CD4-positive, alpha-beta T cell (primary cell): ENCODE measurements at regions of chr18 and their contacts with region 1.

Region 1: DNA sequence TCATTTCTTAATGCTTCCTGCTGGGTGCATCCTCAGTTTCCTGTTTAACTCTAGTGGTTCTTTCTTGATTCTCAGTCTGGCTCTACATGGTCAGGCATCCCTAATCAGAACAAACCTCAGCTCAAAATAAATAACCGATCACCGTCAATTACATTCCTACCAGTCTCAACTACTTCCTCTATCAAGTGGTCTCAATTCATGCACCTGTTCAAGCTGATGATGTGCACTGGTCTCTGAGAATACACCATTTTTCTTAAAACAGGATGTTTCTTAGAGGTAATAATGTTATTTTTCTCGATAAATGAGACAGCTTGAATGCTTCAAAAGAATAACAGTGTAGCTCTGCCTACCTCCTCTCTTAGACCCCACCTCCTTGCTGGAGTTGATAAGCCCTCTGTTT is 420.9 kb downstream of the SOCS6 start:
- DNase-seq: no peak
- ATAC-seq: peak; percentile 44
- H3K4me3 ChIP-seq: no peak overlapping the region
- H3K4me3 Mint-ChIP-seq: no peak overlapping the region
- H3K27ac ChIP-seq: no peak overlapping the region
- H3K27ac Mint-ChIP-seq: peak overlapping the region; percentile 53
- H3K4me1 ChIP-seq: no peaks in the 10 kb centered on the region
- H3K4me1 Mint-ChIP-seq: peaks cover 12% of the 10 kb centered on the region
- H3K27me3 ChIP-seq: no peaks in the 10 kb centered on the region
- H3K27me3 Mint-ChIP-seq: no peaks in the 10 kb centered on the region
- CTCF ChIP-seq: no peak

Region 2: DNA sequence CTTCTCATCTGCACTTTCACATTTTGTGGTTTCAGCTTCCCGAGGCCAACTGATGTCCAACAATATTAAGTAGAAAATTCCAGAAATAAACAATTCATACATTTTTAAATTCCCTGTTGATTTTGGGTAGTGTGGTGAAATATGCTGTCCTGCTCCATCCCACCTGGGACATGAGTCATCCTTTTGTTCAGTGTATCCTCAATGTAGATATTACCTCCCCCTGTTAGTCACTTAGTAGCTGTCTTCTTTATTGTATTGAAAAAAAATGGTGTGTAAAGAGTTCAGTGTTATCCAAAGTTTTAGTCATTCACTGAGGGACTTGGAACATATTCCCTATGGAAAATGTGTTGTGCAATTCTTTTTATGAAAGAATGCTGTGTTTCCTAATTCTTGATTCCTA is 72.7 kb before region 1 on chr18:
- CTCF ChIA-PET with region 1: no interaction called
- POLR2A ChIA-PET with region 1: no interaction called
- intact Hi-C with region 1: loop called in 1 of 2 experiments (anchors 5 kb)
- DNase-seq: no peak
- ATAC-seq: no peak
- H3K4me3 ChIP-seq: no peak overlapping the region
- H3K4me3 Mint-ChIP-seq: no peak overlapping the region
- H3K27ac ChIP-seq: no peak overlapping the region
- H3K27ac Mint-ChIP-seq: no peak overlapping the region
- H3K4me1 ChIP-seq: peaks cover 6% of the 10 kb centered on the region
- H3K4me1 Mint-ChIP-seq: peaks cover 32% of the 10 kb centered on the region
- H3K27me3 ChIP-seq: no peaks in the 10 kb centered on the region
- H3K27me3 Mint-ChIP-seq: no peaks in the 10 kb centered on the region
- CTCF ChIP-seq: no peak

Region 3: DNA sequence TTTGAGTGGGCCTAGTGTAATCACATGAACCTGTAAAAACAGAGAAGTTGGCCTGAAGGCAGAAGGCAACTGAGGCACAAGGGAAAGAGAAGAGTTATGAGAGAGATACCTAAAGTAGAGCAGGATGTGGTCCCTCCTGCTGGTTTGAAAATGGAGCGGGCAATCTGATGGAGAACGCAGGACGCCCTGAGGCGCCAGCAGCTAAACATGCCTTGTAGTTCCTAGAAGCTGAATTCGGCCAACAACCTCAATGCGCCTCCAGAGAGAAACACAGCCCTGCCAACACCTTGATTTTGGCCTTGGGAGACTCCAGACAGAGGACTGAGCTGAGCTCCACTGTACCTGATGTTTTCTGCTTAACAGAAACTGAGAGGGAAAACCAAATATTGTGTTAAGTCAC is 49.1 kb after region 1 on chr18:
- CTCF ChIA-PET with region 1: no interaction called
- POLR2A ChIA-PET with region 1: no interaction called
- intact Hi-C with region 1: no loop called
- DNase-seq: no peak
- ATAC-seq: no peak
- H3K4me3 ChIP-seq: no peak overlapping the region
- H3K4me3 Mint-ChIP-seq: no peak overlapping the region
- H3K27ac ChIP-seq: no peak overlapping the region
- H3K27ac Mint-ChIP-seq: no peak overlapping the region
- H3K4me1 ChIP-seq: no peaks in the 10 kb centered on the region
- H3K4me1 Mint-ChIP-seq: no peaks in the 10 kb centered on the region
- H3K27me3 ChIP-seq: no peaks in the 10 kb centered on the region
- H3K27me3 Mint-ChIP-seq: no peaks in the 10 kb centered on the region
- CTCF ChIP-seq: no peak